CD8-positive, alpha-beta T cell (primary cell): ENCODE measurements at regions of chr2 and their contacts with region 1.

Region 1: DNA sequence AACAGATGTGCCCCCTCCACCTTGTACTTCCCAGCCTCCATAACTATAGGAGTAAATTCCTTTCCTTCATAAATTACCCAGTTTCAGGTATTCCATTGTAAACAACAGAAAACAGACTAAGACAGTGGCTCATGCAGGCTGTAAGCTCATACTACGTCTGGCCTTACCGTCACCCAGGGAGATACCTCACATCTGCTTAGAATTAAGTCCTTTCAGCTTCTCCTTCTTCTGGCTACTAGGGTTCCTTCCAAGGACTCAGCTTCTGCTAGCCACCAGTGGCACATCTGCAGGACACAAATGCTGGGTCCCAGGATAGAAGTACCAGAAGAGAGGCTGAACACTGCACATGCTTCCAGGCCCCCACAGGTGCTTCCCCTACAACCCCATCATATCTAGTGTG is 22.4 kb upstream of the FEZ2 start:
- DNase-seq: no peak
- ATAC-seq: no peak
- H3K4me3 ChIP-seq: no peak overlapping the region
- H3K4me3 Mint-ChIP-seq: no peak overlapping the region
- H3K27ac ChIP-seq: no peak overlapping the region
- H3K27ac Mint-ChIP-seq: no peak overlapping the region
- H3K4me1 ChIP-seq: no peaks in the 10 kb centered on the region
- H3K4me1 Mint-ChIP-seq: no peaks in the 10 kb centered on the region
- H3K27me3 ChIP-seq: no peaks in the 10 kb centered on the region
- H3K27me3 Mint-ChIP-seq: peaks cover 9% of the 10 kb centered on the region
- CTCF ChIP-seq: no peak

Region 2: GRCh38 chr2:36403675-36404230 is 216.6 kb before region 1 on chr2:
- CTCF ChIA-PET with region 1: no interaction called
- POLR2A ChIA-PET with region 1: no interaction called
- intact Hi-C with region 1: no loop called
- DNase-seq: peak in 1 of 9 experiments; percentile 11
- ATAC-seq: peak; percentile 36
- H3K4me3 ChIP-seq: no peak overlapping the region
- H3K4me3 Mint-ChIP-seq: no peak overlapping the region
- H3K27ac ChIP-seq: no peak overlapping the region
- H3K27ac Mint-ChIP-seq: no peak overlapping the region
- H3K4me1 ChIP-seq: no peaks in the 10 kb centered on the region
- H3K4me1 Mint-ChIP-seq: no peaks in the 10 kb centered on the region
- H3K27me3 ChIP-seq: no peaks in the 10 kb centered on the region
- H3K27me3 Mint-ChIP-seq: no peaks in the 10 kb centered on the region
- CTCF ChIP-seq: no peak

Region 3: GRCh38 chr2:36528274-36528673 is 92.0 kb before region 1 on chr2:
- CTCF ChIA-PET with region 1: no interaction called
- POLR2A ChIA-PET with region 1: no interaction called
- intact Hi-C with region 1: no loop called
- DNase-seq: no peak
- ATAC-seq: no peak
- H3K4me3 ChIP-seq: no peak overlapping the region
- H3K4me3 Mint-ChIP-seq: no peak overlapping the region
- H3K27ac ChIP-seq: no peak overlapping the region
- H3K27ac Mint-ChIP-seq: no peak overlapping the region
- H3K4me1 ChIP-seq: no peaks in the 10 kb centered on the region
- H3K4me1 Mint-ChIP-seq: no peaks in the 10 kb centered on the region
- H3K27me3 ChIP-seq: no peaks in the 10 kb centered on the region
- H3K27me3 Mint-ChIP-seq: no peaks in the 10 kb centered on the region
- CTCF ChIP-seq: no peak

Region 4: GRCh38 chr2:36839976-36840617 is 219.8 kb after region 1 on chr2:
- CTCF ChIA-PET with region 1: no interaction called
- POLR2A ChIA-PET with region 1: no interaction called
- intact Hi-C with region 1: loop called in 1 of 2 experiments (anchors 10 kb)
- DNase-seq: no peak
- ATAC-seq: no peak
- H3K4me3 ChIP-seq: no peak overlapping the region
- H3K4me3 Mint-ChIP-seq: no peak overlapping the region
- H3K27ac ChIP-seq: no peak overlapping the region
- H3K27ac Mint-ChIP-seq: no peak overlapping the region
- H3K4me1 ChIP-seq: peaks cover 4% of the 10 kb centered on the region
- H3K4me1 Mint-ChIP-seq: peaks cover 4% of the 10 kb centered on the region
- H3K27me3 ChIP-seq: no peaks in the 10 kb centered on the region
- H3K27me3 Mint-ChIP-seq: no peaks in the 10 kb centered on the region
- CTCF ChIP-seq: no peak